Breast epithelium (tissue), 4 donors: ENCODE measurements at regions of chr4 and their contacts with region 1.

Region 1: DNA sequence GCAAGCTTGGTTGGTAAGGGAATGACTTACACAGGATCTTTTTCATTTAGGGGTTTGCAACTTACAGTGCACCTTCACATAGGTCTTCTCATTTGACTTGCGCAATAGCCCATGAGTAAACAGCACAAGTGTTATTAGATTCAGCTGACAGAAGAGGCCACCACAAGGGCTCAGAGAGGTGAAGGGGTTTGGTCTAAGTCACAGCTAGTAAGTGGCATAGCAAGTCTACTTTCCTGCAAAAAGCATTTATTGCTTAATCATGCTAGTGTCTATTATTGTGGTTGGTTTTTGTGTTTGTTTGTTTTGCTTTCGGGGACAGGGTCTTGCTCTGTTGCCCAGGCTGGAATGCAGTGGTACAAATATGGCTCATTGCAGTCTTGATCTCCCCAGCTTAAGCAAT is 83.3 kb downstream of the SPRY1 start:
- DNase-seq: no peak
- H3K4me3 ChIP-seq: no peak overlapping the region
- H3K27ac ChIP-seq: peak overlapping the region; percentile 50 to 65
- H3K4me1 ChIP-seq: no peaks in the 10 kb centered on the region
- H3K27me3 ChIP-seq: no peaks in the 10 kb centered on the region
- CTCF ChIP-seq: no peak
- POLR2A ChIP-seq: no peak

Region 2: DNA sequence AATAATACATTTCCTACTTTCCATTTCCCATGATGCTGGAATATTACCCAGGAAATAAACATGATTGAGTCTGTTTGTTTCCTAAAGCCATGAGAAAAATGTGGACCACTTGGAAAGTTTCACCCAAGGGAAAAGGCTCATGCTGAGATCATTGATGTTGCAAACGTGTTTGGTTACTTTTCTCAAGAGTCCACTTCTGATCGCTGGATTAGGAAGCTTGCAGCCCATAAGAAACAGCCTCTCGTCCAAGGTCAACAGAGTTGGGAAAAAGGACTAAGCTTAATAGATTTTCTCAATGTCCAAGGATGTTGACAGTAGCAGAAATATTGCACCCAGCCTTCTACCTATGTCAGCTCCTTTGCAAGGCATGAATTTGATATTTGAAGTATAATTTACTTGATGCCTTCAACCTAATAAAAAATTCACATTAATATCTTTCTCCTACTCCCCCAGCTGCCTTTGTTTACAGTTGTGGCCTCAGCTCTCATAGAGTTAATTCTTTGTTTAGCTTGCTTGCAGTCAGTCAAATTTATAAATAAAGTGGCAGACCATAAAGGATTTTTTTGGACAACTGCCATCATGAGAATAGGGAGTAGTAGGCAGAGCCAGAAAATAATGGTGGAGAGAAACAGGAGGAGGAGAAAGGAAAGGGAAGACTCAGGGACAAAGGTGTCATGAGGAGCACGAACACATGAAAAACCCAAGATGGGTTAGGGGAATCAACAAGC is 1393.4 kb before region 1 on chr4:
- intact Hi-C with region 1: no loop called
- DNase-seq: no peak
- H3K4me3 ChIP-seq: no peak overlapping the region
- H3K27ac ChIP-seq: no peak overlapping the region
- H3K4me1 ChIP-seq: no peaks in the 10 kb centered on the region
- H3K27me3 ChIP-seq: no peaks in the 10 kb centered on the region
- CTCF ChIP-seq: no peak
- POLR2A ChIP-seq: no peak

Region 3: DNA sequence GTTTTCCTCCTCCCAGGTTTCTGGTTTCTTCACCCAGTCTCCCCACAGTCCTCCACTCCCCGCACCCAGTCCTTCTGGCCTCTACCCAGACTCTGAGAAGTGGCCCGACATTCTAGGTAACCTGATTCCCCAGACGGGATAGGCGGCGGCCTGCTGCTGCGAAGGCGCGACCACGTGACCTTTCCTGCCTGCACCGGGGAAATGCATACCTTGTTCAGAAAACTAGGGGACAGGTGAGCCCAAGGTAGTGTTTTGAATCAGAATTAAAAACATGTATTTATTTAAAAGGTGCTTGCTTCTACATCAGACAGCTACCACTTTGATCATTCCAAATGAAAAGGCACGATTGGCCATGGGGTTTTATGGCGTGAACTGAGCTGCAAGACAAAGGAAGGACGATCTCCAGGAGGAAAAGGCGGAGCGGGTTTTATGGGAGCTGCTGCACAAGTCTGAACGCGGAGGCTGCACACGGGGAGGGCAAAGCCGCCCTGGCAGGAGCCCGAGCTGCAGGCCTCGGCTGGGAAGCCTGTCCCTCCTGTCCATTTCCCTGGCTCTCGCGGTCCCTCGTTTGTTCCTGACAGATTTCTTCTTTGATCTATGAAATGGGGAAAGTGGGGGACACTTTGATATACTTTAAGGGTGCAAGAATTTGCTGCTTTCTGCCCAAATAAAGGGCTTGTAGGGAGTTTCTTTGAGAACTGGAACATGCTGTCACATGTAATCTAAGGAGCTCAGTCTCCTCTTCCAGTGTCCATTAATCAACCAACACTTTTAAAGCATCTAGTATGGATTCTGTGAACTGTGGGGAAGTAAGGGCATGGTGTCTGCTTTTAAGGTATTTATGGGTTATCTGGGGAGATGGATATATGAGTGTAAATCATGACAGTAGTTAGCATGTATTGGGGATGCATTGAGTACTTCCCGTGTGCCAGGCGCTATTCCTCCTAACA is 67.5 kb after region 1 on chr4:
- intact Hi-C with region 1: loop called (anchors 5 kb)
- DNase-seq: peak; percentile 64 to 68
- H3K4me3 ChIP-seq: peak overlapping the region in 2 of 3 donors; percentile 33 to 43
- H3K27ac ChIP-seq: peak overlapping the region; percentile 84 to 94
- H3K4me1 ChIP-seq: peaks cover 0 to 7% of the 10 kb centered on the region in 2 donors
- H3K27me3 ChIP-seq: no peaks in the 10 kb centered on the region
- CTCF ChIP-seq: no peak
- POLR2A ChIP-seq: no peak